ENCODE measurements at regions of chr22 and their contacts with region 1.

Region 1: GRCh38 chr22:30634471-30635233 is 929 bp upstream of the SLC35E4 start:
- DNase-seq: peak; percentile 79 to 91 (median 88)
- ATAC-seq: peak; percentile 76
- H3K4me3 ChIP-seq: peak overlapping the region; percentile 77
- H3K4me3 Mint-ChIP-seq: peak overlapping the region; percentile 77 to 92 (median 83)
- H3K27ac ChIP-seq: peak overlapping the region; percentile 70
- H3K27ac Mint-ChIP-seq: peak overlapping the region; percentile 75 to 93 (median 85)
- H3K4me1 ChIP-seq: peaks cover 18 to 27% of the 10 kb centered on the region in 2 donors
- H3K4me1 Mint-ChIP-seq: peaks cover 13 to 25% (median 23%) of the 10 kb centered on the region in 7 donors
- H3K27me3 ChIP-seq: no peaks in the 10 kb centered on the region
- H3K27me3 Mint-ChIP-seq: no peaks in the 10 kb centered on the region

Region 2: GRCh38 chr22:30667494-30668385 is 33.1 kb after region 1 on chr22 and contains the start of gene DUSP18:
- CTCF ChIA-PET with region 1: interaction called, 6 read pairs
- POLR2A ChIA-PET with region 1: interaction called, 11 read pairs
- intact Hi-C with region 1: loop called (anchors 1 kb)
- DNase-seq: peak; percentile 87 to 95 (median 92)
- ATAC-seq: peak; percentile 96
- H3K4me3 ChIP-seq: peak within 1 kb of the TSS; percentile 98
- H3K4me3 Mint-ChIP-seq: peak within 1 kb of the TSS; percentile 90 to 98 (median 95)
- H3K27ac ChIP-seq: peak within 1 kb of the TSS; percentile 71
- H3K27ac Mint-ChIP-seq: peak within 1 kb of the TSS; percentile 74 to 97 (median 91)
- H3K4me1 ChIP-seq: peaks cover 4 to 6% of the 10 kb centered on the region in 2 donors
- H3K4me1 Mint-ChIP-seq: peaks cover 17 to 30% (median 24%) of the 10 kb centered on the region in 7 donors
- H3K27me3 ChIP-seq: no peaks in the 10 kb centered on the region
- H3K27me3 Mint-ChIP-seq: peaks cover 0 to 4% (median 0%) of the 10 kb centered on the region in 5 donors
- total RNA-seq, gene DUSP18: 7.4 to 18.5 (median 14.1) TPM

Region 3: GRCh38 chr22:30742291-30743256 is 107.9 kb after region 1 on chr22:
- CTCF ChIA-PET with region 1: no interaction called
- POLR2A ChIA-PET with region 1: no interaction called
- intact Hi-C with region 1: loop called in 1 of 2 experiments (anchors 5 kb)
- DNase-seq: no peak
- ATAC-seq: no peak
- H3K4me3 ChIP-seq: no peak overlapping the region
- H3K4me3 Mint-ChIP-seq: peak overlapping the region in 1 of 10 donors; percentile 27
- H3K27ac ChIP-seq: no peak overlapping the region
- H3K27ac Mint-ChIP-seq: peak overlapping the region in 1 of 9 donors; percentile 89
- H3K4me1 ChIP-seq: no peaks in the 10 kb centered on the region
- H3K4me1 Mint-ChIP-seq: peaks cover 0 to 67% (median 0%) of the 10 kb centered on the region in 7 donors
- H3K27me3 ChIP-seq: no peaks in the 10 kb centered on the region
- H3K27me3 Mint-ChIP-seq: no peaks in the 10 kb centered on the region

Region 4: DNA sequence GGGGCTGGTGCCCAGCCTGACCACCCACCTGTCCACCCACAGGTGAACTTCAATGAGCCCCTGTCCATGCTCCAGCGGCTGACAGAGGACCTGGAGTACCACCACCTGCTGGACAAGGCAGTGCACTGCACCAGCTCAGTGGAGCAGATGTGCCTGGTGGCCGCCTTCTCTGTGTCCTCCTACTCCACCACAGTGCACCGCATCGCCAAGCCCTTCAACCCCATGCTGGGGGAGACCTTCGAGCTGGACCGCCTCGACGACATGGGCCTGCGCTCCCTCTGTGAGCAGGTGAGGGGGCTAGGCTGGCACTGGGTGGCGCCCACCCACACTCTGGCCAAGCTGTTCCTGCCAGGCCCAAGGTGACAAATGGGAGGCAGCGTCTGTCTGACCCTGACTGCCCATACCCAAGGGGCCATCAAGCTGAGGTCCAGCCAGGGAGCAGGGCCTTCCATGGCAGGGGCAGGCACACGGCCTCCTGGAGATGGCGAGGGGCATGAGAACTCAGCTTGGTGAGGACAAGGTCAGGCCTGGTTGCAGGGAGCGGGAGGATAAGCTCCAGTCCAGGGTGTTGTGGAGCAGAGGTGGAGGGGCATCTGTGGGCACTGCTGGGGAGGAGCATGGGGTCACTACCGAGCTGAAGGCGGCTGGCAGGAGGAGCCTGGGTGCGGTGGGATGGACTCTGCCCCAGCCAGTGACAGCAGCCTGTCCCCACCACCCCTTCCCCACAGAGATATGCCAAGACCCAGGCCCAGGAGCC is 256.2 kb after region 1 on chr22:
- CTCF ChIA-PET with region 1: interaction called, 5 read pairs
- POLR2A ChIA-PET with region 1: interaction called, 5 read pairs
- intact Hi-C with region 1: loop called in 1 of 2 experiments (anchors 1 kb)
- DNase-seq: peak in 5 of 9 donors; percentile 12 to 38 (median 19)
- ATAC-seq: peak; percentile 69
- H3K4me3 ChIP-seq: no peak overlapping the region
- H3K4me3 Mint-ChIP-seq: no peak overlapping the region
- H3K27ac ChIP-seq: no peak overlapping the region
- H3K27ac Mint-ChIP-seq: peak overlapping the region in 1 of 9 donors; percentile 65
- H3K4me1 ChIP-seq: peaks cover 0 to 10% of the 10 kb centered on the region in 2 donors
- H3K4me1 Mint-ChIP-seq: peaks cover 15 to 37% (median 32%) of the 10 kb centered on the region in 7 donors
- H3K27me3 ChIP-seq: no peaks in the 10 kb centered on the region
- H3K27me3 Mint-ChIP-seq: no peaks in the 10 kb centered on the region

Region 5: DNA sequence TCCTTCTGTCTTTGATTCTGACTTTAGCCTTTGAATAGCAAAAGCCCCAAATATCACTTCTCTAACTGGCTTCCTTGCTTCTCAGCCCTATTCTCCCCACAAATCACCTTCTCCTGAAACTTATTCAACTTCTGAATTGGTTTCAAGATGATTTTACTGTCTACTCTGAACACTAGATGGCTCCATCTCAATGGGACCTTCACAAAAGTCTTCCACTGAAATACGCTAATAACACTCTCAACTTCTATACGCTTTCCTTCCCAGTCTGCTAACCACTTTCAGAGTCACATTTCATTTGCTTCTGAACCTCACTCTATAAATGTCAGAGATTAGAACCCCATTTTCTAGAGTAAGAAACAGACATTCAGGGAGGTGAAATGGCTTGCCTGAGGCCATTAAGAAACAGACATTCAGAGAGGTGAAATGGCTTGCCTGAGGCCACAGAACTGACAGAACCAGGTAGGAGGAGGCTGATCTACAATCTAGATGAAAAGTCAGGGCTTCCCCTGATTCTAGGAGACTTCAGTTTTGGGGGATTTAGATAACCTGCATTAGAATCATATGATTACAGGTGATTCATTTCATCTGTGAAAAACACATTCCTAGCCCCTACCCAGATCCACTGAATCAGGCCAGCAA is 313.3 kb after region 1 on chr22:
- CTCF ChIA-PET with region 1: interaction called, 4 read pairs
- POLR2A ChIA-PET with region 1: interaction called, 3 read pairs
- intact Hi-C with region 1: loop called in 1 of 2 experiments (anchors 1 kb)
- DNase-seq: peak in 7 of 9 donors; percentile 29 to 67 (median 52)
- ATAC-seq: peak; percentile 72
- H3K4me3 ChIP-seq: no peak overlapping the region
- H3K4me3 Mint-ChIP-seq: no peak overlapping the region
- H3K27ac ChIP-seq: peak overlapping the region; percentile 4
- H3K27ac Mint-ChIP-seq: no peak overlapping the region
- H3K4me1 ChIP-seq: peaks cover 11 to 63% of the 10 kb centered on the region in 2 donors
- H3K4me1 Mint-ChIP-seq: peaks cover 52 to 72% (median 65%) of the 10 kb centered on the region in 7 donors
- H3K27me3 ChIP-seq: no peaks in the 10 kb centered on the region
- H3K27me3 Mint-ChIP-seq: no peaks in the 10 kb centered on the region

Region 6: DNA sequence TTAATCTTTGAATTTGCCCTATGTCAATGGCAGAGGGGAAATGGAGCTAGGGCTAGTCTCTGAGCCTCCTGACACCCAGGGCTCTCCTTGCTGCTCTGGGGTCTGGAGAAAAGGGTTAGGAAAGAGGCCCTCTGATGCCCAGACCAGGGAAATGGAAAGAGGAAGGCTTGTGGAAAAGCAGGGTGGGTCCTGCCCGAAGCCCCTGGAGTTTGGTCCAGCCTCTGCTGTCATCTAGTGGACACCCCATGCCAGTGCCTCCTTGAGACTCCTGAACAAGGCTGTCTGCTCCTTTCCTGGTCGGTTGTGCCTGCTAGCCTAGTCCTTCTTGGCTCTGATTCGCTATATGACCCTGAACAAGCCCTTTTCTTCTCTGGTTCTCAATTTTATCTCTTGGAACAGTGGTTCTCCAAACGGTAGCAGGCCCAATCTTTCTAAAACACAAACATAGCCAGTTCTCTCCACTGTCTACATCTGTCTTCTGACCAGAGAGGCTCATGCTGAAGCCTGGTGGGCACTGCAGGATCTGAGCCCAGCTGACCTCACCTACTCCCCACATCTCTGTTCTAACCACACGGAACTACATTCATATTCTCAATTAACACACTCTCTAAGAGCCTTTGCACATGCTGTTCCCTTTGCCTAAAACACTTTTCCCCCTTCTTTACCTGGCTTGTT is 514.4 kb after region 1 on chr22:
- CTCF ChIA-PET with region 1: no interaction called
- POLR2A ChIA-PET with region 1: no interaction called
- intact Hi-C with region 1: loop called in 1 of 2 experiments (anchors 1 kb)
- DNase-seq: peak in 6 of 9 donors; percentile 4 to 30 (median 20)
- ATAC-seq: peak; percentile 61
- H3K4me3 ChIP-seq: no peak overlapping the region
- H3K4me3 Mint-ChIP-seq: no peak overlapping the region
- H3K27ac ChIP-seq: no peak overlapping the region
- H3K27ac Mint-ChIP-seq: no peak overlapping the region
- H3K4me1 ChIP-seq: no peaks in the 10 kb centered on the region
- H3K4me1 Mint-ChIP-seq: peaks cover 0 to 7% (median 0%) of the 10 kb centered on the region in 7 donors
- H3K27me3 ChIP-seq: no peaks in the 10 kb centered on the region
- H3K27me3 Mint-ChIP-seq: peaks cover 0 to 13% (median 4%) of the 10 kb centered on the region in 5 donors

Measured in naive thymus-derived CD4-positive, alpha-beta T cell (primary cell).